Activated CD4-positive, alpha-beta memory T cell treated with anti-CD3 and anti-CD28 coated beads for 36 hours (primary cell): ENCODE measurements at regions of chr13 and their contacts with region 1.

Region 1: DNA sequence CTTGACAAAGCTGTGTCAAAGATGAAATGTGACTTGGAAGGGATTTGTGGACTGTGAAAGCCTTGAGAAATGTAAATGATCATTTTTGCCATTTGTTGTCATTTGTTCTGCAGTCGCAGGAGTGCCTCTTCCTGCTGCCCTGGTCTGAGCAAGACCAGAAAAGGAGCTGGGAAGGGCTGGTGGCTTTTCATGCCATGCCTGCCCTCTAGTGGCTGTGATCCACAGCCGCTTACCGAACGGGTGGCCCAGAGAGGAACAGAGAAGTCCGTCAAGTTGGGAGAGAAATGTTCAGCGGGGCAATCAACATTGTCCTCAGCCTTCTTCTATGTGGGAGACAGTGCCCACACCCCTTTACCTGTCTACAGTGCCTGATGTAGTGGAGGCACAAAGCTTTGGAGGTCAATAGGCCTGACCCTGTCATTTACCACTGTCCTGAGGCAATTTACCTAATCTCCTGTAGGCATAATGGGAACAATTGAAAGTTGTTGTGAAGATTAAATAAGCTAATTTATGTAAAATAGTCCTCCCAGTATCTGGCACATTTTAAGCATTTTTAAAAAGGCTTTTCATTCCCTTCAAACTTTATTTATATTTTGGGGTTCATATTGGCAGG is 224.4 kb downstream of the B3GLCT start:
- DNase-seq: peak; percentile 78
- H3K4me3 Mint-ChIP-seq: no peak overlapping the region
- H3K27ac Mint-ChIP-seq: no peak overlapping the region
- H3K4me1 Mint-ChIP-seq: peaks cover 4% of the 10 kb centered on the region
- H3K27me3 Mint-ChIP-seq: peaks cover 5% of the 10 kb centered on the region

Region 2: DNA sequence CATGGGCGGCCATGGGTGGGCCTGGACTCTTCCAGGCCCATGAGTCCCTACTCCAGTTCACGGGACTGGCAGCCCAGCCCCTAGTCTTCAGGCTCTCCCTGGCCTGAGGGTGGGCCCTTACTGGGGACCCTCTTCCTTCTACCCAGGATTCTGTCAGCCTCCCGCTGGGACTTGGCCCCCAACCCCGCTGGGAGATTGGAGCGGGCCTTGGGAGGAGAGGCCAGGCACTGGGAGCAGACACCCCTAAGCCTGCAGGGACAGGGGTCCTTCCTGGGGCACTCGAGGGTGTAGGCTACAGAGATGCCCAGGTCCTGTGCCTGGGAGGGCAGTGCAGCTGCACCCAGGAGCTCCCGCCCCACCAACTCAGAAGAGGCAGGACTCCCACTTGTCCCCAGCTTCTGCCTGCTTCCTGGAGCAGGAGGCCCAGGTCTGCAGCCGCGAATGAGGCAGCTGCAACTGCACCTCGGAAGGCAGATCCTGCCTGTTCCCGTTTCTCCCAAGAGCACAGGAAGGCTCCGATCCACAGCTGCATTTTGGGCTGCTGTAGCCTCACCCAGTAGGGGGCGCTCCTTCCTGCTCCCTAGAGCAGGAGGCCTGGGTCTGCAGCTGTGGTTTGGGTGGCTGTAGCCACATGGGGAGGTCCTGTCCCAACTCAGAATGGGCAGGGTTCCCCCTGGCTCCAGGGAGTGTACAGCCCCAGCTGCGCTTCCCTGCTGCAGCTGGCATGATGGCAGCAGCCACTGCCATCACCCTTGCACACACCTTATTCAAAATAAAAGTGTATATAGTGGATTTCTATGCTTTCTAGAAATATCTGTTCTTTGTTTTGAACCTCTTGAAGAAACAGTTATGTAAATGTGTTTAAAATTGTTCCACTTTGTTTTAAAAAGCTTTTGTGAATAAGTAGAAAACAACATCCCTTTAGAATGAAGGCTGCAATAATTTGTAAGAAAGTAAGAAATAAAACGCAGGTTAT is 445.0 kb before region 1 on chr13:
- CTCF ChIA-PET with region 1: no interaction called
- POLR2A ChIA-PET with region 1: no interaction called
- intact Hi-C with region 1: loop called (anchors 10 kb)
- DNase-seq: peak; percentile 57
- H3K4me3 Mint-ChIP-seq: no peak overlapping the region
- H3K27ac Mint-ChIP-seq: no peak overlapping the region
- H3K4me1 Mint-ChIP-seq: no peaks in the 10 kb centered on the region
- H3K27me3 Mint-ChIP-seq: peaks cover 7% of the 10 kb centered on the region

Region 3: DNA sequence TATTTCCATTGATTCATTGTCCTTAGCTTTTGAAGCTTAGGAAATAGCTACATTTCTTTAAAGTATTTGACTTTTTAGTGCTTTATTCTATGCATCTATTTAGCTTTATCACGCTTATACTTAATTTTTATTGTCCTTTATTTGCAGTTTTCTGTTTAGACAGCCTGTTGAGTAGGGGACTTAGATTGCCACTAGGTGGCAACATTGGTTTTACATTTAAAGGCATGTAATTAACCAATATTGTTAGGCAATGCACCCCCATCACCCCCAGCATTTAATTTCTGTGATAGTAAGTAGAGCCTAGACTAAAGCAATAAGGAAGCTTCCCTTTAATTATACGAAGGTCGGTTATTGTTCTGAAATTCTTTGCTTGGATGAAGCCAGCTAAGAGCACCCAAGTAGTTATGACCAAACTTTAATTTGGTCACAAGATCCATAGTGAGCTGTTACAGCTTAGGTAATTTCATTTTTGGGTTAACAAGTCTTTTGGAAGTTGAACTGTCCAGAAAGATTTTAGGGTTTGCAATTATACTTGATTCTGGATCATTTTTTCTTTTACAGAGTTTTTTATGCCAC is 187.9 kb before region 1 on chr13:
- CTCF ChIA-PET with region 1: interaction called, 58 read pairs
- POLR2A ChIA-PET with region 1: no interaction called
- intact Hi-C with region 1: loop called (anchors 1 kb)
- DNase-seq: no peak
- H3K4me3 Mint-ChIP-seq: no peak overlapping the region
- H3K27ac Mint-ChIP-seq: no peak overlapping the region
- H3K4me1 Mint-ChIP-seq: no peaks in the 10 kb centered on the region
- H3K27me3 Mint-ChIP-seq: no peaks in the 10 kb centered on the region

Region 4: DNA sequence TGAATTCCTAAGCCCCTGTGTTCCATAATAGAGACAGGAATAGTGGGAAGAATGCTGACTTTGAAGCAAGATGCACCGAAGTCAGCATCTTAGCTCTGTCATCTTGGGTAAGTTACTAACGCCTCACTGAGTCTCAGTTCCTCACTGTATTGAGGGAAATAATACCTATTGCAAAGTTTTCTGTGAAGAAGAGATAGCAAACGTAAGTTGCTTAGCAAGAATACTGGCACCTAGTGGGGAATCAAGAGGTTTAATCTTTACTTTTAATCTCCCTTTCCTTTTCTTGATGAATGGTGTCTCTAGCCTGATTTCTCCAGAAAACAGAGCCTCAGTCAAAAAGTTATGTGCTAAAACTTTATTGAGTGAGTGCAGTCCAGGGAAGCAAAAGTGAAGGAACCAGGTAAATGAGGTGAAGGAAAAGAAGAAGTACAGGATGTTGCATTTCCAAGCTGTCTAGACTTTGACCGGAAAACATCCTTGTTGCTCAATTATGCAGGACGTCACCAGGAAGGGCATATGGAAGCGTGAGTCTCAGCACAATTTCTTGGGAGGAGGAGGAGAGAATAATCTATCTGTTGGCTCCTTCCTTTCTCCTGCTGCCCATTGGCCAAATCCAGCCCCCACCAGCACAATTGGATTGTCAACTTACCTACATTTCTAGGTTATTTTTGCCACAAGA is 14.4 kb before region 1 on chr13:
- CTCF ChIA-PET with region 1: interaction called, 15 read pairs
- POLR2A ChIA-PET with region 1: no interaction called
- intact Hi-C with region 1: no loop called
- DNase-seq: no peak
- H3K4me3 Mint-ChIP-seq: no peak overlapping the region
- H3K27ac Mint-ChIP-seq: no peak overlapping the region
- H3K4me1 Mint-ChIP-seq: no peaks in the 10 kb centered on the region
- H3K27me3 Mint-ChIP-seq: no peaks in the 10 kb centered on the region